ENCODE measurements at regions of chr20 and their contacts with region 1.

Region 1: GRCh38 chr20:49219089-49219923 is at the start of gene DDX27:
- DNase-seq: peak; percentile 98
- ATAC-seq: peak; percentile 97 to 99
- total RNA-seq, gene DDX27: 13.3 to 19.0 TPM

Region 2: DNA sequence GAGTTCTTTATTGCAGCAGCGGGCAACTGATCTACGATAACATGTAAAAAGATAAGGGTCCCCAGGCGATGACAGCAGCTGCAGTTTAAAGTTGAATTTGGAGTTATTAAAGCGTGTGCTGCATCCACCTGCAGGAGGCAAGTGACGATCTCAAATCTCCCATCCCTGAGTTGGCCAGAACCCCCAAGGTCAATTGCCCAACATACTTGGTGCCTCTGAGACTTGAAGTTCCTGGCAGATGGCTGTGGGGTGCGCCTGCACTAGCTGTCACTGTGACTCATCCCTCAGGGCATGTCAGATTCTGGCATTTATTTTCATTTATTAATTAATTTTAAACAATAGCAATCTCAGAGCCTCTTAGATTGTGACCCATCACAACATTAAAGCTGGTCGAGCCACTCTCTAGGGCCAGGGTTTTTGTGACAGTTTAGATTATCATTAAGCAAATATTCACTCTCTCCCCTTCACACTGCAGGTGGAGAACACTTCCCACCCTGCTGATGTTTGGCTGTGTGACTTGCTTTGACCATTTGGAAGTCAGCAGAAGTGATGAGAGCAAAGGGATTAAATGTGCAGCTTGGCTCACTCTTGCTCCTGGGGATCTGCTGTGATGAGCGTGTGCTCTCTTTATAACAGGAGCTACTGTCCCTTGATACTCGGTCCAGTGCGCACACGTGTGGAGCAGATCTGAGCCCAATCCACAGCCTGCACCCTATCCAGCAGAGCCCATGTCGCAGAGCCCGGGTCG is 1143.4 kb before region 1 on chr20:
- intact Hi-C with region 1: no loop called
- DNase-seq: no peak
- ATAC-seq: no peak

Region 3: DNA sequence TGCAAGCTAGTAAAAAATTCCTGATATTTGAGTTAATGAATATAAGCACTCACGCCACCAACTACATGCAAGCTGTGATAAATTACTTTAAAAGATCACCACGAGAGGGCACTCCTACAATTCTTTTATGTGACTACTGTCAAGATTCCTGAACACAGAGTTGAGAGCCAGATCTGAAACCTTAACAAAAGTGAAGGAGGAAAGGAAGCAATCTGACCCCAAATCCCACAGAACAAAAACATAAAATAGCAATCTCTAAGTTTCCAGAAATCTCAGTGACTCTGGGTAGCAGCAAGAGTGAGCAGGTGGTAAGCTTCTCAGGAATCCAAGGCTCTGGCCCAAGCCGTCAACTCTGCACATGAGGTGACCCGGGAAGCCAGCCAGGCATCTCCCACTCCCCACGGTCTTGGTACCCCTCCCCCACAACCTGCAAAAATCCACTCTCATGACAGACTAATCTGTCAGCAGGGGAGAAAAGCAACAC is 86.3 kb before region 1 on chr20:
- intact Hi-C with region 1: loop called (anchors 1 to 5 kb)
- DNase-seq: no peak
- ATAC-seq: peak; percentile 59 to 71

Region 4: GRCh38 chr20:49179368-49180277 is 39.7 kb before region 1 on chr20:
- intact Hi-C with region 1: loop called in 1 of 2 experiments (anchors 5 kb)
- DNase-seq: no peak
- ATAC-seq: no peak